Activated CD4-positive, alpha-beta memory T cell treated with anti-CD3 and anti-CD28 coated beads for 36 hours (primary cell): ENCODE measurements at regions of chr17 and their contacts with region 1.

Region 1: DNA sequence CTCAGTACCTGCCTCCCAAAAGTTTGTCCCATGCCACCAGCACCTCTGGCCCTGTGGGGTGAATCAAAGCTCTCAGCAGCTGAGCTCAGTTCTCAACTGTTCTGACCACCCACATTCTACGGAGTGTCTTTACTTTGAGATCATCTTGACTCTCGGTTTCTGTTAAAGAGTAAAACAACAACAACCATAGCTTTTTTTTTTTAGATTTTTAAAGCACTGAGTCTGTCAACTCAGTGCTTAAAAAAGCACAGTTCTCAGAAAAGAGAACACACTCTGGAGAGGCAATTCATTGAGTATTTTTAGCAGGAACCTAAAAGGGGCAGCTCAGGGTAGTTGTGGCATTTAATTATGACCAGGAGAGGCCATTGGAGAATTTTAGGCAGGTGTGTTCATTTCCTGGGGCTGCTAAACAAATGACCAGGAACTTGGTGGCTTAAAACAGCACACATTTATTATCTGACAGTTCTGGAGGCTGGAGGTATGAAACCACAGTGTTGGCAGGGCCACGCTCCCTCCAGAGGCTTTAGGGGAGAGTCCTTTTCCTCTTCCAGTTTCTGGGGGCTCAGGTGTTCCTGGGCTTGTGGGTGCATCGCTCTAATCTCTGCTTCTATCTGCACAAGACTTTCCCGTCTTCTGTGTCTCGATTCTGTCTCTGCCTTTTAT is 6.7 kb upstream of the WFIKKN2 start:
- DNase-seq: no peak
- H3K4me3 Mint-ChIP-seq: no peak overlapping the region
- H3K27ac Mint-ChIP-seq: no peak overlapping the region
- H3K4me1 Mint-ChIP-seq: peaks cover 2% of the 10 kb centered on the region
- H3K27me3 Mint-ChIP-seq: peaks cover 2% of the 10 kb centered on the region

Region 2: DNA sequence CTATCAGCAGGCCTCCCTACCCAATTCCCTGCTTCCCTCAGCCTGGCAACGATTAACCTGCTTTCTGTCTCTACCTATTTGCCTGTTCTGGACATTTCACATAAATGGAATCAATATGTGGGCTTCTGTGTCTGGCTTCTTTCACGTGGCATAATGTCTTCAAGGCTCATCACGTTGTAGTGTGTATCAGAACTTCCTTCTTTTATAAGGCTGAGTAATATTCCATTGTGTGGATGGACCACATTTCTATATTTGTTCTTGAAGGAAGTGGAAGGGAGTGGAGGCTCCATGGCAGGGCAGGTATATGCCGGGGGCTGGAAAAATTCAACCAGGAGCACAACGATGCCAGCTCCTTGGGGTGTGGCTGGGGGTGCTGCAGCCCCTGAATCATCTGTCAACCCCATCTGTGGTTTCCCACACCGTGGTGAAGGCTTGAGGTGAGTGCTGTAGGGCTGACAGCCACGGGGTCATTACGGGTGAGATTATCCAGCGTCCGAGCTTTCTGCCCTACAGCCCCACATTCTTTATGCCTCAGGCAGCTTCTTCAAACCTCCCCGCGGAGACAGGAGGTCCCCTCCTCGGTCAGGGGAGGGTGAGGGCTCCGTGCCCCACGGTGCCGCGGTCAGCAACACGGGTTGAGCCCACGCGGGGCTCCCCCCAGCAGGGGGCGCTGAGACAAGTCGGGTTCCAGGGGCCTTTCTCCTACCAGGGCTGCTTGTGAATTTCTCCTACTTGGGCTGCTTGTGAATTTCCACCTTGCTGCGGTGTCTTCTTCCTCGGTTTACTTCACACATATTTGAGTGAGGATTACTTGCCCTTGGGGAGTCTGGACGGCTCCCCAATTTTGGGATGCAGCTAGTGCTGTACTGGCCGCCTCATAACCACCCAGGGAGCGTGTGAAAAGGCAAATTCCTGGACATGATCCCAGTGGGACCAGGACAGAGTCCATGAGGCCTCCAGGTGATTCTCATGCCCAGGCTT is 11.6 kb before region 1 on chr17:
- CTCF ChIA-PET with region 1: interaction called, 10 read pairs
- POLR2A ChIA-PET with region 1: no interaction called
- intact Hi-C with region 1: no loop called
- DNase-seq: peak; percentile 61
- H3K4me3 Mint-ChIP-seq: no peak overlapping the region
- H3K27ac Mint-ChIP-seq: no peak overlapping the region
- H3K4me1 Mint-ChIP-seq: peaks cover 2% of the 10 kb centered on the region
- H3K27me3 Mint-ChIP-seq: peaks cover 11% of the 10 kb centered on the region

Region 3: GRCh38 chr17:51778842-51779241 is 950.2 kb after region 1 on chr17:
- CTCF ChIA-PET with region 1: no interaction called
- POLR2A ChIA-PET with region 1: no interaction called
- intact Hi-C with region 1: no loop called
- DNase-seq: no peak
- H3K4me3 Mint-ChIP-seq: no peak overlapping the region
- H3K27ac Mint-ChIP-seq: no peak overlapping the region
- H3K4me1 Mint-ChIP-seq: peaks cover 9% of the 10 kb centered on the region
- H3K27me3 Mint-ChIP-seq: peaks cover 10% of the 10 kb centered on the region